Sigmoid colon (tissue), 7 donors: ENCODE measurements at regions of chr12 and their contacts with region 1.

Region 1: GRCh38 chr12:32455607-32456071 is 56.3 kb downstream of the FGD4 start:
- DNase-seq: no peak
- H3K4me3 ChIP-seq: peak overlapping the region in 3 of 4 donors; percentile 18 to 34 (median 33)
- H3K27ac ChIP-seq: peak overlapping the region; percentile 7 to 65 (median 36)
- H3K4me1 ChIP-seq: peaks cover 0 to 19% (median 5%) of the 10 kb centered on the region in 4 donors
- H3K27me3 ChIP-seq: no peaks in the 10 kb centered on the region
- CTCF ChIP-seq: peak in 2 of 4 experiments; percentile 50 to 57
- EP300 ChIP-seq: no peak
- POLR2A ChIP-seq: no peak

Region 2: DNA sequence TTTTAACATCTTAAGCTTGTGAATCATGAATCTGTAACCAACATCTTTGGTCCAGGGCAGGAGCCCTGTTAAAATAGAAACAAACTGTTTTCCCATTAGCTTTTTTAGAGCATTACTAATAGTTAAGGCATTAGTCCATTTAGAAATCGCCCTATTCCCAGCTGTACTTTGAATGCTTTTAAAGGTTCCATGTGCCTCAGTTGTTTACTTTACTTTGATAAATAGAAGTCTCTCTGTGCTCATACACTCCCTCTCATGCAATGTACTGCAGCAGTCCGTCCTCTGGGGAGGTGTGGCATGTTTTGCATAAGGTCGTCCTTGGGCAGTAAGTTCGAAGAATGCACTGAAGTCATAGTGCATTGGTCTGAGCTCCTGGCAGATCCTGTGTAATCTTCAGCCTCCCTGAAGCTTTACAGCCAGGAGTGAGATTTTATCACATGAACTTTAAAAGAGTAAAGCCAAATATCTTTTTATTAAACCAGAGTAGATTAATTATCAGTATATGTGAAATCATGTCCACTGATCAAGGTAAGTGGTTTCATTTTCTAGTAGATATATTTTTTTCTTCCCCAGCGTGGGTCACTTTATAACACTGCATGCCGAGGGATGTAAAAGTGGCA is 78.4 kb after region 1 on chr12:
- intact Hi-C with region 1: no loop called
- DNase-seq: peak; percentile 82
- H3K4me3 ChIP-seq: peak overlapping the region; percentile 18 to 42 (median 35)
- H3K27ac ChIP-seq: peak overlapping the region; percentile 66 to 82 (median 70)
- H3K4me1 ChIP-seq: peaks cover 0 to 32% (median 18%) of the 10 kb centered on the region in 4 donors
- H3K27me3 ChIP-seq: no peaks in the 10 kb centered on the region
- CTCF ChIP-seq: no peak
- EP300 ChIP-seq: no peak
- POLR2A ChIP-seq: no peak

Region 3: DNA sequence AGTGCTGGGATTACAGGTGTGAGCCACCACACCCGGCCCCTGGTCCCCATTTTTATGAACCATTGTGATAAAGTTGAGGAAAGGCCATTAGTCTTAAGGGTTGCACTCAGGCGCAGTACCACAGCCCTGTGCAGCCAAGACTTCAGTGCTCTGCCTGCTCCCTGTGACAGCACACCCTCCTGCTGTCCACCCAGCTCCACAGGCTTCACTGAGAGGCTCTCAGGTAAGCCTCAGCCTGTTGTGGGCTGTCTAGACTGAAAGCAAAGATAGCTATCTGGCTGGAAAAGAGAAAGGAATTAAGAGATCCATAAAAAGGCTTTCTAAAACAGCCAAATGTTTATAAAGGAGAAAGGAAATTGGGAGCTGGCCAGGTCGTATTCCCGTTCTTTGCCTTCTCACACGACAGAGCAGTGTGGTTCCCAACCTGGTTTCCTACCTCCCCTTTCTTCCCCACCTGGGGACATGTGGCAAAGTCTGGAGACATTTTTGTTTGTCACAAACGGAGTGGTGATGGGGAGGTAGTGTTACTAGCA is 204.3 kb after region 1 on chr12:
- intact Hi-C with region 1: loop called (anchors 5 kb)
- DNase-seq: no peak
- H3K4me3 ChIP-seq: no peak overlapping the region
- H3K27ac ChIP-seq: peak overlapping the region in 2 of 4 donors; percentile 58 to 64
- H3K4me1 ChIP-seq: peaks cover 0 to 12% (median 12%) of the 10 kb centered on the region in 4 donors
- H3K27me3 ChIP-seq: no peaks in the 10 kb centered on the region
- CTCF ChIP-seq: no peak
- EP300 ChIP-seq: no peak
- POLR2A ChIP-seq: no peak

Region 4: DNA sequence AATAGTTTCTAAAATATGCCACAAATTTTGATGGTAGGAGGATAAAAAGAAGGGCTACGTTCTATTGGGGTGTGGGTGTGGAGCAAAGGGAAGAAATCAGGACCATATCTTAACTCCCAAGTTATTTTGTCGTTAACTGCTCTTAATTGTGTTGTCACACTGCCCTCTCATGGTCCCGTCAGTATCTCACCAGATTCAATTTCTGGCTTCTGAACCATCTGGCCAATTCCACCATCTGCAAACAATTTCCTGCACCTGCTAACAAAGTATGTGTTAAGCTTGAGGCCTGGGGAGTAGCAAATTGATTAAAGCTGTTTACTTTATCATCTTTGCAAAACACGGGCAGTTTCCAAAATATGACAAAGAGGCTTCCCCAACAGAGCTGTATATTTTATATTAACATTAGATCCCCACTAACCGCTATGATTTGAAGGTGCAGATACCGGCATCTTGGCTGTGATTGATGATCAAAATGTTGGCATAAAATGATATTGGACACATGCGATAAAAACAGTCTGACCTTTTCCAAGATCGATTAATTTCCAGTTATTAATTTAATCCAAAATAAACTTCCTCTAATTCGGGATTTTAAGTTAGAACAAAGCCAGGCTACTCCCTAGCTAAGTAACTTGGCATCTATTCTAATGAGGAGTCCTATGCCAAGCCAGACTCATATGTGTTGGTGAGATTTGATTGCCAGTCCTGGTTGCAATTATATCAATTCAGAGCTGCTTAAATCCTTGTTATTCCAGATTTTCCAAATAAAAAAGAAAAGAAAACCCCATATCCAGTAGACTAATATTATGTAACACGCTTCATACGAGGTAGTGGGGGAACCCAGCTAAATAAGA is 216.5 kb after region 1 on chr12:
- intact Hi-C with region 1: loop called (anchors 5 kb)
- DNase-seq: no peak
- H3K4me3 ChIP-seq: no peak overlapping the region
- H3K27ac ChIP-seq: no peak overlapping the region
- H3K4me1 ChIP-seq: no peaks in the 10 kb centered on the region
- H3K27me3 ChIP-seq: no peaks in the 10 kb centered on the region
- CTCF ChIP-seq: peak in 3 of 4 experiments; percentile 13 to 24 (median 18)
- EP300 ChIP-seq: no peak
- POLR2A ChIP-seq: no peak